BJ (cell line): ENCODE measurements at regions of chr5 and their contacts with region 1.

Region 1: DNA sequence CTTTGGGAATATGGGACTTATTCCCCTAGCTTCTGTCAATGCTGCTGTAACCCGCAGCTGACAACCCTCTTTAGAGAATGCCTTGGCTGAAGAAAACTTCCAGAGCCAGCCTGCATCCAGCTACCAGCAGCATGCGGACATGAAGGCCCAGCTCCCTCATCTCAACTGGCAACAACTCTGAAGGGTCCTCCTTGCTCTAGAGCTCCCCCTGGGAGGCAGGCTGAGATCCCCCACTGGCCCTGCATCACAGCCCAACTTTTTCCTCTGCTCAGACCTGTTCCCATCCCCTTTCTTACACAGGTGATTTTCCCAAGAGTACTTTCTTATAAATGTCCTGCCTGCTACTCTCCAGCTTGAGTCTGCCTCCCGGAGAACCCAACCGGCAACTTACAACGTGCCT is 18.7 kb upstream of the WNT8A start:
- DNase-seq: no peak
- H3K4me3 ChIP-seq: no peak overlapping the region
- H3K27me3 ChIP-seq: no peaks in the 10 kb centered on the region; the same call in 1 of the 2 replicates
- CTCF ChIP-seq: peak; percentile 36; the same call in 1 of the 2 replicates

Region 2: GRCh38 chr5:138054847-138055558 is 10.1 kb before region 1 on chr5:
- CTCF ChIA-PET with region 1: interaction called, 36 read pairs
- POLR2A ChIA-PET with region 1: no interaction called
- DNase-seq: no peak
- H3K4me3 ChIP-seq: no peak overlapping the region
- H3K27me3 ChIP-seq: peaks cover 1% of the 10 kb centered on the region; the same call in 1 of the 2 replicates
- CTCF ChIP-seq: no peak

Region 3: GRCh38 chr5:138083702-138084101 is 18.6 kb after region 1 on chr5 and contains the start of gene WNT8A:
- CTCF ChIA-PET with region 1: interaction called, 20 read pairs
- POLR2A ChIA-PET with region 1: no interaction called
- DNase-seq: no peak
- H3K4me3 ChIP-seq: no peak within 1 kb of the TSS
- H3K27me3 ChIP-seq: peaks cover 1% of the 10 kb centered on the region; the same call in 1 of the 2 replicates
- CTCF ChIP-seq: no peak
- polyA plus RNA-seq, gene WNT8A: not detected in 2 replicates